Adrenal gland (tissue), 19 donors: ENCODE measurements at regions of chr9 and their contacts with region 1.

Region 1: DNA sequence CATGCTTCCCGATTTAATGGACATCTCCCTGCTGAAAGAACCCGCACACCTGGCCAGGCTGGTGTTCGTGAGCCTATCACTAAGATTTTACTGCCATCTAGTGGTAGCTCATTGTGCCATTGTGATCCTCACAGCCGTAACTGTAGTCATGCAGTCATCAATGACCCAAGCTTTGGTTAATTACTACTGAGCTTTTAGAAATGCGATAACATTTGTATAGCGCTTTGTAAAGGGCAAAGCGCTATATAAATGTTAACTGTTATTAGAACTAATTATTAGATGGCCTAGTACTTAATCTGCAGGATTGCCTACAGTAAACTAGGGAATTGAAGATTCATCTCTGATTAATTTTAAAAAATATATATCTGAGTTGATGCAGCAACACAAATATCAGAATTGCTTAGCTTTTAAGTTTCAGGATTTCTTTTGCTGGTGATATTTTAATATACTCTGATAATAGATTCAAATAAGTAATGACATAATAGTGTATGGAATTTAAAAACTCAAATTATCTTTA is 90.2 kb downstream of the HACD4 start:
- DNase-seq: peak; percentile 53 to 80 (median 67)
- H3K4me3 ChIP-seq: no peak overlapping the region
- H3K27ac ChIP-seq: peak overlapping the region in 1 of 5 donors; percentile 13
- H3K4me1 ChIP-seq: peaks cover 0 to 10% of the 10 kb centered on the region in 2 donors
- H3K27me3 ChIP-seq: no peaks in the 10 kb centered on the region
- CTCF ChIP-seq: peak; percentile 67 to 90 (median 84)
- POLR2A ChIP-seq: no peak

Region 2: DNA sequence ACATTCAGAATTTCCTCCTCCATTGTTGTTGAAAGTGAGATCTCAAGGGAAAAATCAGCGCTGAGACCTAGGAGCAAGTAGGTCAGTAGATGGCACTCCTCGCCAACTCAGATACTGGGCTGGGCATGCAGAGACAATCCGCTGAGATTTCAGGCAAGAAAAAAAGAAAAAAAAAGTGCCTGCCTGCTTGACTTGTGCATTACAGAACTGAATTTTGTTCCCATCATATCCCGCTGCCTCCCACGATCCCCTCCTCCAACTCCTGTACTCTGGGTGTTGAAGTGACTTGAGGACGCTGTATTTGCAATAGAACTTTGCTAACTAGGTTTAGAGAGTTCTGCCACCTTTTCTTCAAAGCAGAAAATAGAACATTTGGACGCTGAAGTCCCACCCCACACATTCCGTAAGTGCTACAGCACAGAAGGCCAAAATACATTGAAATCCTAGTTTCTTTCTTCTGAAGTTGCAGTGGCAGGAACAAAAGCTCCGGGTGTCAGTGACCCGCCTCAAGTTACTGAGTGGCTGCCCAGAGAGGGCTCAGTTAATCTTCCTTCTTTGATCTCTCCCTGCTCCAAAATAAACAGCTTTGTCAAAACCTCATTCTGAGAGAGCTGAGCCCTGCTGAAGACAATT is 584.7 kb before region 1 on chr9:
- intact Hi-C with region 1: loop called in 1 of 2 experiments (anchors 10 kb)
- DNase-seq: peak; percentile 73 to 92 (median 84)
- H3K4me3 ChIP-seq: peak overlapping the region in 1 of 4 donors; percentile 45
- H3K27ac ChIP-seq: peak overlapping the region in 4 of 5 donors; percentile 35 to 64 (median 57)
- H3K4me1 ChIP-seq: peaks cover 10 to 28% of the 10 kb centered on the region in 2 donors
- H3K27me3 ChIP-seq: no peaks in the 10 kb centered on the region
- CTCF ChIP-seq: peak; percentile 29 to 86 (median 72)
- POLR2A ChIP-seq: peak in 1 of 2 donors; percentile 6

Region 3: DNA sequence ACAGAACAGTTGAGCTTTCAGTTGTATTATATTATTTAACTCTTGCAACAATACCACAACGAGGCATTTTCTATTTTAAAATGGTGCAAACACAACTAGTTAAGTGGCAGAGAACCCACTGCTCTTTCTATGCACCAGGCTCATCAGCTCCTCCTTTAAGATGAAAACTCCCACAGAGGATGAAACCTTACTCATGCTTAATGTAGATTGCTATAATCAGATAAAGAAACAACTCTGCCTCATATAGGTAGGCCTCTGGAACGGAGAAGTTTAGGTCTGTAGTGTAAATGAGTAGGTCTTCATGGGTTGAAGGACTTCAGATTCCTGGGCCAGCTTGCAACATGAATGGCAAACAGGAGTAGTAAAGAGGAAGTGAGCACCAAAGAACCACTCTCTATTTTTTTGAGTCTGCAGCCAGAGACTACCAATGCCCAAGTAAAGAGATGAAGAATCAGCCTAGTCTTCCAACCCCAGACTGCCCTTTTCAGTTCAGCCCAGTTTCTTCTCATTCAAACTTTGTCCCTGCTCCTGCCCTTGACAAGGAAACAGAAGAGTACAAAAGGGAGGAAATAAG is 56.4 kb after region 1 on chr9:
- intact Hi-C with region 1: no loop called
- DNase-seq: no peak
- H3K4me3 ChIP-seq: no peak overlapping the region
- H3K27ac ChIP-seq: no peak overlapping the region
- H3K4me1 ChIP-seq: no peaks in the 10 kb centered on the region
- H3K27me3 ChIP-seq: no peaks in the 10 kb centered on the region
- CTCF ChIP-seq: no peak
- POLR2A ChIP-seq: no peak